K562 (cell line): ENCODE measurements at regions of chr3 and their contacts with region 1.

Region 1: GRCh38 chr3:37210230-37210629 is 35.8 kb upstream of the LRRFIP2 start:
- DNase-seq: no peak
- ATAC-seq: no peak
- H3K4me3 ChIP-seq: no peak overlapping the region
- H3K27ac ChIP-seq: no peak overlapping the region
- H3K4me1 ChIP-seq: no peaks in the 10 kb centered on the region; a peak in 1 of 5 replicates
- H3K27me3 ChIP-seq: peaks cover 3 to 11% of the 10 kb centered on the region in 2 experiments; a peak in 4 of 5 replicates
- CTCF ChIP-seq: no peak
- EP300 ChIP-seq: no peak
- POLR2A ChIP-seq: no peak
- RAD21 ChIP-seq: no peak

Region 2: DNA sequence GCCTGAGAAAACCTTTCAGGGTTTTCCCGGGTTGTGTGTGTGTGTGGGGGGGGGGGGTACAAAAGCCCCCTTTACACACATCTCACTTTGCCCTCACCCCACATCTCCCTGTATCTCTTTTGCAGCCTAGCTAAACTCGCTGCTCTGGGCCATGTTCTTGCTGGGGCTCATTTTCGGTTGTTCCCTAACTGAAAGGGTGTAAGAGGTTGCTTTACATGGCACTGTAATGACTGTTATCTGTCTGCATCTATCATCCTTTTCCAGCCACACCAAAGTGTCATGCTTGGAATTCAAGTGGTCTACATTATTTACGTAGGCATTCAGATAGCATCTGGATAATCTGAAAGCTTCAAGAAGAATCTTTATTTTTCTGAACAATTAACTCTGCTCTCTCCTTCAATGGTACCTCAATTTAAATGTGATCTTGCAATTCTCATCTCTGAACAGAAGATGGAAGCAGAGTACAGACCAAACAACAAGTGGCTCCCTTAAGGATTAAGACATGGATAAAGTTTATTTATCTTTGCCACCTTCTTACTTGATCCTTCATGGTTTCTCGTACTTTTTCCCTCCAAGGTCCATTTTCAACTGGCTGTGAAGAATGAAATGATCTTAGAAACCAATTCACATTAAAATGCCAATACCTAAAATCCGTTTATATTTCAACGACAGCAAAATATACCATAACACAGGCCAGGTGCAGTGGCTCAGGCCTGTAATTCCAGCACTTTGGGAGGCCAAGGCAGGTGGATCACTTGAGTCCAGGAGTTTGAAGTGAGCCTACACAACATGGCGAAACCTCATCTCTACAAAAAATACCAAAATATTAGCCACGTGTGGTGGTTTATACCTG is 480.8 kb before region 1 on chr3:
- CTCF ChIA-PET with region 1: interaction called, 3 read pairs
- POLR2A ChIA-PET with region 1: no interaction called
- in situ Hi-C with region 1: loop called (anchors 10 kb)
- intact Hi-C with region 1: loop called (anchors 2 kb)
- DNase-seq: peak; percentile 43 to 58 (median 52)
- ATAC-seq: peak; percentile 86
- H3K4me3 ChIP-seq: no peak overlapping the region
- H3K27ac ChIP-seq: no peak overlapping the region
- H3K4me1 ChIP-seq: peaks cover 0 to 6% of the 10 kb centered on the region in 2 experiments; a peak in 2 of 5 replicates
- H3K27me3 ChIP-seq: peaks cover 0 to 16% of the 10 kb centered on the region in 2 experiments; a peak in 4 of 5 replicates
- CTCF ChIP-seq: peak; percentile 51 to 94 (median 79); a peak in 5 of 6 replicates
- EP300 ChIP-seq: no peak
- POLR2A ChIP-seq: no peak
- RAD21 ChIP-seq: peak; percentile 97

Region 3: DNA sequence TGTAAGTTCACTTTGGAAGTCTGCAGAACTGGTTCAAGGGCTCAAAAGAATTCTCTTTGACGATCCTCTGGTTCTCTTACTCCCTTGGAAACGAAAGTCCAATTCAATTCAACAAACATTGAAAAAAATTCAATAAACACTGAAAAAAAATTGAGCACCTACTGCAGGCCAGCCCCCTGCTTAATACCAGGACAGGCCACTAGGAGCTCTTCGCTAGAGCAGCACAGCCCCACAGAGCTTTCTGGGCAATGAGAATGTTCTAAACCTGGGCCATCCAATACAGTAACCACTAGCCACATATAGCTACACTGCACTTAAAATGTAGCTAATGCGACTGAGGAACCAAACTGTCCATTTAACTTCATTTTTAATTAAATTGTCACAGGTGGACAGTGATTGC is 395.5 kb before region 1 on chr3:
- CTCF ChIA-PET with region 1: no interaction called
- POLR2A ChIA-PET with region 1: no interaction called
- in situ Hi-C with region 1: no loop called
- intact Hi-C with region 1: loop called (anchors 10 kb)
- DNase-seq: peak in 3 of 4 experiments; percentile 20 to 47 (median 41)
- ATAC-seq: peak; percentile 89
- H3K4me3 ChIP-seq: no peak overlapping the region
- H3K27ac ChIP-seq: no peak overlapping the region
- H3K4me1 ChIP-seq: no peaks in the 10 kb centered on the region
- H3K27me3 ChIP-seq: peaks cover 5 to 43% of the 10 kb centered on the region in 2 experiments; a peak in 4 of 5 replicates
- CTCF ChIP-seq: peak; percentile 40 to 57 (median 50)
- EP300 ChIP-seq: no peak
- POLR2A ChIP-seq: no peak
- RAD21 ChIP-seq: no peak

Region 4: GRCh38 chr3:37024092-37024491 is 186.1 kb before region 1 on chr3:
- CTCF ChIA-PET with region 1: interaction called, 5 read pairs
- POLR2A ChIA-PET with region 1: no interaction called
- in situ Hi-C with region 1: no loop called
- intact Hi-C with region 1: loop called (anchors 1 kb)
- DNase-seq: peak in 3 of 4 experiments; percentile 22 to 63 (median 54)
- ATAC-seq: peak; percentile 51; the same call in 2 of the 3 replicates
- H3K4me3 ChIP-seq: no peak overlapping the region
- H3K27ac ChIP-seq: no peak overlapping the region
- H3K4me1 ChIP-seq: peaks cover 4 to 8% of the 10 kb centered on the region in 2 experiments; a peak in 3 of 5 replicates
- H3K27me3 ChIP-seq: no peaks in the 10 kb centered on the region
- CTCF ChIP-seq: peak; percentile 34 to 52 (median 47); a peak in 5 of 6 replicates
- EP300 ChIP-seq: no peak
- POLR2A ChIP-seq: no peak
- RAD21 ChIP-seq: peak in 1 of 2 experiments; percentile 61; a peak in 2 of 4 replicates

Region 5: DNA sequence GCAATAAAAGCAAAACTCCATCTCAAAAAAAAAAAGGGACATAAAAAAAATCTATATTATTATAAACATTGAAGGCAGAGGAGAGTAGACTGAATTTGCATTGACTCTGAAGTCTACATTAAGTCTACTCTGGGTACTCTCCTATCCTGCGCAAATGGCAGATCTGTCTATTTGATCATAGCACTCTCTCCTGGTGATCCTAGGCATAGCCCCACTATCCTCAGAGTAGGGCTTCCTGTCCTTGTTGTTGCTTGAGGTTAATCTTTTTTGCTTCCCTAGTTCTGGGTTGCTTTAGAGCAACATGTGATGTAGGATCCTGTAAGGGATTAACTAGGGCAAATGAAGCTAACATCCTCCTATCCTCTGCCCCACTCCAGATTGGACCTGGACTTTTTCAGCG is 46.2 kb after region 1 on chr3:
- CTCF ChIA-PET with region 1: no interaction called
- POLR2A ChIA-PET with region 1: no interaction called
- in situ Hi-C with region 1: no loop called
- intact Hi-C with region 1: loop called (anchors 5 kb)
- DNase-seq: peak in 2 of 4 experiments; percentile 45 to 46
- ATAC-seq: peak; percentile 91
- H3K4me3 ChIP-seq: no peak overlapping the region
- H3K27ac ChIP-seq: no peak overlapping the region
- H3K4me1 ChIP-seq: no peaks in the 10 kb centered on the region
- H3K27me3 ChIP-seq: no peaks in the 10 kb centered on the region
- CTCF ChIP-seq: peak; percentile 43 to 55 (median 52); a peak in 5 of 6 replicates
- EP300 ChIP-seq: no peak
- POLR2A ChIP-seq: no peak
- RAD21 ChIP-seq: peak in 1 of 2 experiments; percentile 62; a peak in 2 of 4 replicates

Region 6: DNA sequence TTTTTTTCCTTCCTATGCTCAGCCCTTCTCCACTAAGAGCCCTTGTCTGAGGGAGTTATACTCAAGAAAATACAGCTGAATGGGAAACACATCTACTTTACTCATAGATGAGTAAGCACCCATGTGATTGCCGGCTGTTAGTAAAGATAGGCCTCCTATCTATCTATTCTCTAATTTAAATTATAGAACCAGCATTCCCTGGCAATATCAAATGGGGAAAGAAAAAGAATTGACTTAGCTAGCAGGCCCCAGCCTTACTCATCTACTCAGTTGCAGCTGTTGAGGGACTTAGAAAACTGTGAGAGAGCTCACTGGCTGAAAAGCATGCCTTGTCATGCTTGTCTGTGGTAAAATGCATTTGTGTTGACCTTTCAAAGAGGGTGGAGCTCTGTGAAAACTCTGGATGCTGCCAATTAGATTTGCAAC is 81.1 kb after region 1 on chr3:
- CTCF ChIA-PET with region 1: no interaction called
- POLR2A ChIA-PET with region 1: no interaction called
- in situ Hi-C with region 1: no loop called
- intact Hi-C with region 1: no loop called
- DNase-seq: peak; percentile 71 to 88 (median 74)
- ATAC-seq: peak; percentile 97
- H3K4me3 ChIP-seq: no peak overlapping the region
- H3K27ac ChIP-seq: peak overlapping the region; percentile 73
- H3K4me1 ChIP-seq: peaks cover 4 to 20% of the 10 kb centered on the region in 2 experiments; a peak in 2 of 5 replicates
- H3K27me3 ChIP-seq: no peaks in the 10 kb centered on the region
- CTCF ChIP-seq: no peak
- EP300 ChIP-seq: peak; percentile 89
- POLR2A ChIP-seq: no peak
- RAD21 ChIP-seq: no peak

Region 7: GRCh38 chr3:37417297-37418082 is 207.3 kb after region 1 on chr3:
- CTCF ChIA-PET with region 1: no interaction called
- POLR2A ChIA-PET with region 1: no interaction called
- in situ Hi-C with region 1: no loop called
- intact Hi-C with region 1: no loop called
- DNase-seq: peak in 1 of 4 experiments; percentile 5
- ATAC-seq: no peak
- H3K4me3 ChIP-seq: no peak overlapping the region
- H3K27ac ChIP-seq: no peak overlapping the region
- H3K4me1 ChIP-seq: no peaks in the 10 kb centered on the region
- H3K27me3 ChIP-seq: no peaks in the 10 kb centered on the region
- CTCF ChIP-seq: no peak
- EP300 ChIP-seq: no peak
- POLR2A ChIP-seq: no peak
- RAD21 ChIP-seq: no peak